Heart left ventricle (tissue), 16 donors: ENCODE measurements at regions of chr12 and their contacts with region 1.

Region 1: GRCh38 chr12:123388177-123388947 is 4.4 kb downstream of the KMT5A start:
- DNase-seq: peak; percentile 86 to 91 (median 88)
- ATAC-seq: peak; percentile 39 to 75 (median 62)
- H3K4me3 ChIP-seq: peak overlapping the region; percentile 25 to 88 (median 62)
- H3K27ac ChIP-seq: peak overlapping the region; percentile 47 to 98 (median 93)
- H3K4me1 ChIP-seq: peaks cover 0 to 59% (median 42%) of the 10 kb centered on the region in 12 donors
- H3K27me3 ChIP-seq: no peaks in the 10 kb centered on the region
- CTCF ChIP-seq: peak in 9 of 12 donors; percentile 9 to 56 (median 39)
- POLR2A ChIP-seq: no peak

Region 2: DNA sequence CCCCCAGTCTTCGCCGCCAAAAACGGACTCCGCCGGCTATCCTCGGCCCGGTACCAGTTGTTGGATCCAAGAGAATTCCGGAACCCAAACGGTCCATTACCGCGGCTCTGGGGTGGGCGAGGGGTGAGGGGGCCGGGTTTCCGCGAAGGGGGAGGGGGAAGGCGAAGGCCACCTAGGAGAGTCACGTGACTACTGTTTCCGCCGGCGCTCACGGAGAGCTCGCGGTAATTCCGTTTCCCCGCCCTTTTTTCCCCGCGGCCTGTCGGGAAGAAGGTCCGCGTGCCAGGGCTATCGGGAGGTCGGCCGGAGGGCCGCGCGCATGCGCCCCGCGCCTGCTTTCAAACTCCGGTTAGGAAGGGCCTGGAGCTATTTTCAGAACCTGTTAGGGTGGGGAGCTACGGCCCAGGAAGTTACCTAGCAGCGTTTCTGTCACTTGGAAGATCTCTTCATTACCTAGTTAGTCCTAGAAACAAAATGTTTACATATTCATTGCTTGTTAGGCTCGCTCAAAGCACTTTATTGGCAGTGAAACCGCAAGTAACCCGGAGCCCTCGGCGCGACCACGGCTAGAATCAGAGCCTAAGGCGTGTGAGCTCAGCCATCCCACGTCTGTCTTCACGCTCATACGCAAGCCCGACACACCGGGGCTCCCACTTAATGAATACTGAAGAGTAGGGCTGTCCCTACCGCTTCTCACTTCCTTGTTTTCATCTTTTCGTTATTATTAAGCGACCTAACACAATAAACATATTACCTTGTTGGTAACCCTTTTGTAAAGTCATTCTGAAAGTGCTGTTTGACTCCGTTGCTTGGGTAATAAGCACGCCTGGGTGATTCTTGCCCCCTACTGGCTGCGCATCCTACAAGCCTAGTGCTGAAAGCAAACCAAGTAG is 23.1 kb before region 1 on chr12:
- intact Hi-C with region 1: loop called in 7 of 10 experiments (anchors 1 to 2 kb)
- DNase-seq: peak; percentile 99
- ATAC-seq: peak; percentile 90 to 96 (median 94)
- H3K4me3 ChIP-seq: peak overlapping the region; percentile 67 to 98 (median 87)
- H3K27ac ChIP-seq: peak overlapping the region; percentile 82 to 99 (median 95)
- H3K4me1 ChIP-seq: peaks cover 4 to 38% (median 21%) of the 10 kb centered on the region in 12 donors
- H3K27me3 ChIP-seq: no peaks in the 10 kb centered on the region
- CTCF ChIP-seq: peak; percentile 52 to 96 (median 73)
- POLR2A ChIP-seq: peak in 1 of 2 donors; percentile 76

Region 3: DNA sequence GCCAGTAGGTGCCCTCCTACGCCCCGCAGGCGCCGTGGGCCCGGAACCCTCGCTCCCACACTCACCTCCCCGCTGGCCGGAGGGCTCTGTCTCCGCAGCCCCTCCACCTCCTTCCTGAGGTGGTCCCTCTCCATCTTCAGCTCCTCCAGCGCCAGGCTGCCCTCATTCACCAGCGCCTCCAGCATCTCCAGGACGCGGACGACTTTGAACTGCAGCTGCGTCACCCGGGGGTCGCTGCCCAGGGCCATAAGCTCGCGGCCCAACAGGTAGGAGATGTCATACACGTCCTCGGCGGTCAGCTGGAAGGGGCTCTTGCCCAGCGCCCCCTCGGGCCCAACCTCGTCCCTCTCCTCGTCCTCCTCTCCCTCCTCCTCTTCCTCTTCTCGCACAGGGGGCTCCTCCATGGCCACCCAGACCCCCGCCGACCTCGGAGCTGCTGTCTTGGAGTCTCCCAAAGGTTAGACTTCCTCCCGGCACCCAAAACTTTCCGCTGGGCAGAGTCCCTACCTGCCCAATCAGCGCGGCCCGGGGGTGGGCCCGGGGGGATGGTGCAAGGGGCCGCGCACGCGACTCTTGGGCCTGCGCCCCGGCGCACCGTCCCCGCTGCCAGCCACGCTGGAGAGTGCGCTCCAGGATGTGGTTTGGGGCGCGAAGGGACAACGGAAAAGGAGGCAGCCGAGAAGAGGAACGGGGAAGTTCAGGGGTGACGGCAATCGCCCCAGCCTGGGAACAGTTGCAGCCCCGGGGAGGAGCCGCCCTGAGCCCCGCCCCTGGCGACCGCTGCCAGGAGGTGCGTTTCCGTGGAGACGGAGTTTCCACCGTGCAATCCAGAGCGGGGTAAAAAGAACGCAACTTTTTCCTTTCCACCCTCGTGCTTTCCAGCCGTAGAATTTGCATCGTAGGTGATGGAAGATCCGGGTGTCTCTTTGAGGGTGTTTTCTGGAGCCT is 47.9 kb after region 1 on chr12 and contains the start of gene RILPL2:
- intact Hi-C with region 1: loop called in 2 of 10 experiments (anchors 10 kb)
- DNase-seq: peak; percentile 90 to 94 (median 90)
- ATAC-seq: peak; percentile 91 to 98 (median 96)
- H3K4me3 ChIP-seq: peak within 1 kb of the TSS; percentile 63 to 98 (median 91)
- H3K27ac ChIP-seq: peak within 1 kb of the TSS; percentile 47 to 93 (median 82)
- H3K4me1 ChIP-seq: peaks cover 0 to 51% (median 27%) of the 10 kb centered on the region in 12 donors
- H3K27me3 ChIP-seq: no peaks in the 10 kb centered on the region
- CTCF ChIP-seq: peak in 1 of 12 donors; percentile 3
- POLR2A ChIP-seq: peak in 1 of 2 donors; percentile 63
- total RNA-seq, gene RILPL2: 1.6 to 3.4 (median 2.1) TPM

Region 4: GRCh38 chr12:123445388-123446351 is 57.3 kb after region 1 on chr12:
- intact Hi-C with region 1: loop called in 2 of 10 experiments (anchors 10 kb)
- DNase-seq: peak in 4 of 5 donors; percentile 25 to 51 (median 41)
- ATAC-seq: peak; percentile 4 to 85 (median 76)
- H3K4me3 ChIP-seq: peak overlapping the region in 3 of 12 donors; percentile 5 to 8 (median 5)
- H3K27ac ChIP-seq: peak overlapping the region; percentile 33 to 82 (median 64)
- H3K4me1 ChIP-seq: peaks cover 0 to 55% (median 19%) of the 10 kb centered on the region in 12 donors
- H3K27me3 ChIP-seq: no peaks in the 10 kb centered on the region
- CTCF ChIP-seq: no peak
- POLR2A ChIP-seq: no peak

Region 5: DNA sequence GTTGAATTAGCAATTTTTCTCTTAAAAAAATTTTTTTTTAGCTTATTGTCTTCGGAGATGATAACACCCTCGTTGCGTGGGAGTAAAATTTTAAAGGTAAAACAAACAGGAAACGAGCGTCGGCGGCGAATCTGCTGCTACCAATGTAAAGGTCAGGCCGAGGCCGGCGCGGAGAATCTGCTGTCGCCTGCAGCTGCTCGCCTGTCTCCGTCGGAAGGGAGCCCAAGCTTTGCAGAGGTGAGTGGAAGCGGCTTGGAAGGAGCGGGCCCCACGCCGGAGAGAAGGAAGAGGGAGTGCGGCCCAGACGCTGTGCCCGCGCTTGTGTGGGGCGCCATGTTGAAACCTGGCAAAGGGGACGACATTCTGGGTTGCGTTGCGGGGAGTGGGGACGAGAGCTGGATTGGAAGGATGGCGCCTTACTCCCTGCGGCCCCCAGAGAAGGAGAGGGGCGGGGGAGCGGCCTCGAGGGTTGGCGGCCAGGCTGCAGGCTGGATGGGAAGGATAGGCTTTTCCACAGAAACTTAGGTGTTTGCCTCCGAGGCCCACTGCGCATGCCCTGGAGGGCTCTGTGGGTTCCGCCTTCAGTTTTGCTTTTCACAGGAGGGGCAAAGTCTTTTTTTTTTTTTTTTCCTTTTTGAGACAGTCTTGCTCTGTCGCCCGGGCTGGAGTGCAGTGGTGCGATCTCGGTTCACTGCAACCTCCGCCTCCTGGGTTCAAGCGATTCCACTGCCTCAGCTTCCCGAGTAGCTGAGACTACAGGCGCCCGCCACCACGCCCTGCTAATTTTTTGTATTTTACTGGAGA is 69.8 kb after region 1 on chr12 and contains the start of gene SNRNP35:
- intact Hi-C with region 1: loop called in 3 of 10 experiments (anchors 5 to 10 kb)
- DNase-seq: peak; percentile 81 to 91 (median 84)
- ATAC-seq: peak; percentile 85 to 91 (median 90)
- H3K4me3 ChIP-seq: peak within 1 kb of the TSS; percentile 63 to 93 (median 79)
- H3K27ac ChIP-seq: peak within 1 kb of the TSS; percentile 94 to 99 (median 98)
- H3K4me1 ChIP-seq: peaks cover 0 to 25% (median 12%) of the 10 kb centered on the region in 12 donors
- H3K27me3 ChIP-seq: no peaks in the 10 kb centered on the region
- CTCF ChIP-seq: peak in 1 of 12 donors; percentile 4
- POLR2A ChIP-seq: peak in 1 of 2 donors; percentile 43
- total RNA-seq, gene SNRNP35: 18.5 to 27.4 (median 20.0) TPM

Region 6: DNA sequence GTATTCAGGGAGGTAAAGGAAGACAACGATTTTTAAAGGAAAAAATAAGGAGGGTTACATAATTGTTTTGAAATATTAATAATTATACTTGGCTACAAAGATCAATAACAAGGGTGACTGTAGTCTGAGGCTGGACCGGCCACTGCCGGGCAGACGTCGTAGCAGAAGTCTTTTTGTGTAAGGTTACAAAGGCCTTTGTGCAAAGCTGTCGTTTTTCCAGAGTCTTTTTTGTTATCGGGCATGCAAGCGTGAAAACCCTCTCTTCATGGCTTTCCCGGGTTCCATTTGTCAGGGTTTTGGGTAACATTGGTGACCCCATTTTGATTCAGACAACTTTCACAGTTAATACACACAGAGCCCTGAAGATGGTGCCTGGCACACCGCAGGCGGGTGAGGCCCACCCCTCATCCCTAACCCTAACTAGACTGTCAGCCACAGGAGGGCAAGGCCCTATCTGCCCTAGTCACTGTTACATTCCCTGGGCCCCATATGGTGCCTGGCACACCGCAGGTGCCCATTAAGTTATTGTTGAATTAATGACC is 113.9 kb after region 1 on chr12:
- intact Hi-C with region 1: no loop called
- DNase-seq: no peak
- ATAC-seq: no peak
- H3K4me3 ChIP-seq: no peak overlapping the region
- H3K27ac ChIP-seq: no peak overlapping the region
- H3K4me1 ChIP-seq: peaks cover 0 to 9% (median 0%) of the 10 kb centered on the region in 12 donors
- H3K27me3 ChIP-seq: no peaks in the 10 kb centered on the region
- CTCF ChIP-seq: no peak
- POLR2A ChIP-seq: no peak

Region 7: DNA sequence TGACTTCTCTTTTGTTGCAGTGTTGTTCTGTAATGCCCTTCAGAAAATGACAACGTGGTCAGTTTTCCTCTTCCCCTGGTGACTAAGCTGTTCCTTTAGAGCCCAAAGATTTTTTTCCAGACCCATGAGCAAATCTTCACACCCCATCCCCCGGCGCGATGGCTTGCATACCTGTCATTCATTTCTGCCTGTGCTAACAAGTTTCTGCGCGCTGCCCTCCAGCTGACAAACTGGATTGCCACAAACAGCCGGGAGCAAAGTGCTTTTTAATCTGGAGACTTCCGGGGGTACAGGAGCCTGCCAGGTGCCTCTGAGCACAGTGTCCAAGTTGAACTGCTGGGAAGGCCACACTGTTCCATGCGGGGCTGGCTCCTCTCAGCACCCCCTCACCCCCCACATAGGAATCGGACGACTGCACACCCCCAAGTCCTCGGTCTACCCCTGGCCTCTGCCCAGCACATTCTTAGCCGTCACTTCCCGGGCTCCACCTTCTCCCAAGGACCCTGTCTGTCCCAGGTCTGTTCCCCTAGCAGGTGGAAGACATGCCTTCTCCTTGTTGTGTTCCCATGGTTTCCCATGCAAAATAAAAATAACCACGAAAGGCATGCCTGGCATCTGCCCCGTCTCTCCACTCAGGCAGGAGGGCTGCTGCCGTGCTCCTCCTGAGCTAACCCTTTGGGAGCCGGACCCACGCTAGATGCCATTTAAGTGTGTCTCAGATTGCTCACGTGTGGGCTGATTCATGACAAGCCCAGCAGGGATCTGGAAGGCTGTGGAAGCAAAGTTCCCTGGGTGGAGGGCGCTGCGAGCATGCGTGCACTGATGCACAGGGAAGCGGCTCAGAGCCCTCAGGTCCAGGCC is 131.0 kb after region 1 on chr12:
- intact Hi-C with region 1: loop called in 1 of 10 experiments (anchors 5 kb)
- DNase-seq: peak; percentile 63 to 87 (median 75)
- ATAC-seq: peak; percentile 64 to 85 (median 81)
- H3K4me3 ChIP-seq: peak overlapping the region in 2 of 12 donors; percentile 4 to 10
- H3K27ac ChIP-seq: peak overlapping the region; percentile 67 to 96 (median 82)
- H3K4me1 ChIP-seq: peaks cover 0 to 50% (median 12%) of the 10 kb centered on the region in 12 donors
- H3K27me3 ChIP-seq: no peaks in the 10 kb centered on the region
- CTCF ChIP-seq: no peak
- POLR2A ChIP-seq: no peak

Region 8: DNA sequence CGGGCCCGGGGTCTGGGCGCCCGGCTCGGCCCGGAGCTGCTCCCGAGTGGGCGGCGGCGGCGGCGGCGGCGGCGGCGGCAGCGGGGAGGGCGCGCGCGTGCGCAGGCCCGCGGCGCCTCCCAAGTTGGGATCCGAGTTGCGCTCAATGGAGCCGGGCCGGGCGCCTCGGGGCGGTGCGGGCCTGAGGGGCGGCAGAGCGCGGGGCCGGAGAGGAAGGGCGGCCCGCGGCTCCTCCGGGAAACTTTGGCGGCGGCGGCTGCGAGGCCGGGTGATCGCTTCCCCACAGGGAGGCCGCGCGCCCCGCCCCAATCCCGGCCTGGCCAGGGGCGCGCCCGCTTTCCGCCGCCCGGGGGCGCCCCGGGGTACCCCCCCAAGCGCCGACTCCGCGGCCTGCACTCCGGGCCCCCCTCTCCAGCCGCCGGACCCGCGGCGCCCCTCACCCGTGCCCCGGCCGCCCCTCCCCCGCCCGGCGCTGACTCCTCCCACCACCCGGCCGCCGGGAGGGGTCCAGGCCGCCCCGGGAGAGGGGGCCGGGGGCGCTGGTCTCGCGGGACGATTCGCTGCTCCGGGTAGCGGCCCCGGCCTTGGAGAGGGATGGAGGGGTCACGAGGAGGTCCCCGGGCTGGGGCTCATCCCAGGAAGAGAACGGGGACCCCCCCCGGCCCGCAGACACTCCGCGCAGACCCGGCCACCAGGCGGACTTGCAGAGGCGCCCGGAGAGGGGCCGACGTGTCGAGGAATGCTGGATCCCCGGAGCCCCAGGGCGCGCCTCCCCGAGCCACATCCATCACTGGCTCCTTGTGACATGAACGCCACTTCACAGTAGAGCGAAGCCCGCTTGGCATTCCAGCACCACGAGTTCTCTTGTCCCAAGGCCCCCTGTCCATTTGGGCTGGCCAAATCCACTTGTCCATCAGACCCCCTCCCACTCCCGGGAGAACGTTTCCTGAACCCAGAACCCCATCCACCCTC is 145.6 kb after region 1 on chr12 and contains the start of gene RILPL1:
- intact Hi-C with region 1: loop called in 2 of 10 experiments (anchors 5 kb)
- DNase-seq: peak; percentile 56 to 79 (median 64)
- ATAC-seq: peak; percentile 18 to 81 (median 56)
- H3K4me3 ChIP-seq: peak within 1 kb of the TSS; percentile 63 to 98 (median 76)
- H3K27ac ChIP-seq: peak within 1 kb of the TSS; percentile 86 to 97 (median 94)
- H3K4me1 ChIP-seq: peaks cover 0 to 43% (median 29%) of the 10 kb centered on the region in 12 donors
- H3K27me3 ChIP-seq: peaks cover 0 to 8% (median 0%) of the 10 kb centered on the region in 9 donors
- CTCF ChIP-seq: peak in 10 of 12 donors; percentile 17 to 62 (median 46)
- POLR2A ChIP-seq: peak in 1 of 2 donors; percentile 30
- total RNA-seq, gene RILPL1: 64.1 to 119 (median 79.4) TPM